Left cardiac atrium (tissue), 4 donors: ENCODE measurements at regions of chr3 and their contacts with region 1.

Region 1: GRCh38 chr3:160027541-160028195 is 39.0 kb downstream of the IL12A start:
- DNase-seq: no peak
- ATAC-seq: peak in 1 of 2 donors; percentile 46

Region 2: DNA sequence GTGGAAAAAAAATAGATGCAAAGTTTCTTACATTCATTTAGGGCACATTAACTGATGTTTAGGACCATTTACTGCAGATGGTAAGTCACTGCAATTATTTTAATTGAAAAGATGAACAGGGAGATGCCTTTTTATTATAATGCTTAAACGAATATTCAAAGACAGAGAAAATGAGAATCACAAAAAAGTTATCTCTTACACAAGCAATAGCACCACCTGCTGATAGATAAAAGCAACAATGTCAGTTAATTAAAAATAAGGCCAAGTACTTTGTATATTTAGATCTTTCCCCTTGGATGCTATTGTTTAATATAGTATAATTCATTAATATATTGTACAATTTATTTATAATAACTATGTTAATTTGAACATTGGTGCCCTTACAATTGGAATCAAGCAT is 315.5 kb after region 1 on chr3:
- intact Hi-C with region 1: loop called in 1 of 2 experiments (anchors 1 kb)
- DNase-seq: no peak
- ATAC-seq: no peak

Region 3: DNA sequence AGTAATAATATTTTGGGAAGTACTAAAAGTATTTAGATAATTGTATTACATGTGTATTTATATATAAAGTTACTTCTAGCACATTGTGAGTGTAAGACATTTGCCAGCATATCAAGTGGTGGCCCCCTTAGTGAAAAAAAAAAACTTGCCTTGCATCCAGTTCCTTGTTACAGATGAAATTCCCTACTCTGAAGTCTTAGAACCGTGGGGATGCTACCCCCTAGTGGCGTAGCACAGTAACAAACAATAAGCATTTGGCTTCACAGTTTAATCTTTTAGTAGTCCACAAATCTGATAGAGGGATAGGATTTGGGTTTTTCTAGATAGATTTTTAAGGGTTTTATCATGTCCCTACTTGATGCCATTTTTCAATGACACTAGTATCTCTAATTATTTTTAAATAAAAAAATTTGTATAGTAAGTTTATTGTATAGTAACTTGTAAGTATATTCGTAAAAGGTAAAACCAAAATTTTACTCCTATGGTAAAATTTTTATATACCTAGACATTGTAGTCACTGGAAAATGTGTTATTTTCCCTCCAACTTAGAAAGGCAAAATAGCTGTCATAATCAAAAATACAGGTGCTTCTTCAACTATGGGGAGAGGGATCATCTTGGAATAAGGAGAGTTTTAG is 386.1 kb after region 1 on chr3:
- intact Hi-C with region 1: loop called (anchors 2 to 10 kb)
- DNase-seq: peak; percentile 37
- ATAC-seq: peak; percentile 59 to 61